IMR-90 (cell line): ENCODE measurements at regions of chr5 and their contacts with region 1.

Region 1: DNA sequence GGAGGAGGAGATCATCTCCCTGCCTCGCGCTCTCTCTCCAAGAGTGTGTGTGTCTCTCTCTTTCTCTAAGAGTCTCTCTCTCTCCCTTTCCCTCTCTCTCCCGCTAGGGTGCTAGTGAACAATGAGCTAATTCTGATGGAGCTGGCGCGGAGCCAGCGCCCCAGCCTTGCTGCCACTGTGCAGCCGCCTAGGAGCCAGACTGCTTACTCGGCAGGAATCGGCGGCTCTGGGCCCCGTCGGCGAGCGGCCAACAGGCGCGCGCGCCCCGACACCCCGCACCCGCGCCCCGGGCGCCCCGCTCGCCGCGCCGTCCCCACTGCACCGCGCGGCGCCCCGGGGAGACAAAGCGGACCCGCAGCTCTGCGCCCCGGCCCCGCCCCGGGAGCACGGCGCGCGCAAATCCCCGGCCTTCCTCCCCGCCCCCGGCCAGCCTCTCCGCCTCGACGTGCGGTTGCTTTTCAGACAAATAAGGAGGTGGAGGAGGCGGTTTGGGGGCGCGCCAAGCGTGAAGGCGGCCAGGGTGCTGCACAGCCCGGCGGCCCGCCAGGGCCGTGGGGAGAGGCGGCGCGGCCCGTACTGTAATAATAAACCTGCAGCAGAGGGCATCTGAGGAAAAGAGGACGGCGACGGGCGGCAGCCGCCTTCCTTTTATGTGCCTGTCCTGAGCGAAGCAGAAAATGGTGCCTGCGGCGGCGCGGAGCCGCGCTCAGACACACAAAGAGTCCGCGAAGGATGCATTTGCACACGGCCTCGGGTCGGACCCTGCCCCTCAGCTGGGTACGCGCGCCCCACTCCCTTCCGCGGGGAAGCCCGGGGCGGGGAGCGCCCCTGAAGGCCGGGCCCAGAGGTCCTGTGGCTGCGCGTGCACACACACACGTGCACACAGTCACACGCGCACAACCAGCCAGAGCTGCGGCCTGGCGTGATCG is 625 bp upstream of the NREP start:
- DNase-seq: peak; percentile 97
- ATAC-seq: peak; percentile 90
- H3K4me3 ChIP-seq: peak overlapping the region; percentile 95
- H3K27ac ChIP-seq: peak overlapping the region; percentile 93
- H3K4me1 ChIP-seq: peaks cover 4% of the 10 kb centered on the region
- H3K27me3 ChIP-seq: no peaks in the 10 kb centered on the region
- CTCF ChIP-seq: peak; percentile 59
- POLR2A ChIP-seq: peak; percentile 77
- RAD21 ChIP-seq: peak; percentile 57

Region 2: DNA sequence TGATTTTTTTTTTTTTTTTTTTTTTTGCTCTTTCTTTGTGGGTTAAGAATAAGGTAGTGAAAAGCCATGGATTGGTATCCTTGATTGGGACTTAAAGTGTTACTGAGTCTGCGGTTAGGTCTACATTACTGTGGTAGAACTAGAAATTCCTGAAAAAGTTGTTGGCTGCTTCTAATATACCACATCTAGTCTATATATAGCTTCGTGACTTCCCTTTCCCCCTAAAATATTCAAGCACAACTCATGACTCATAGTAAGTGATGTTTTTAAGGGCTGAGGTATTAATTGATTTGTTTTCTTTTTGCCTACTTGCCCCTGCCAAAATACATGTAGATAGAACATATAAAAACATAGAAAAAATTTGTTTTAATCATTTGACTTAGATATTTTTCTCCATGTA is 1278.7 kb before region 1 on chr5:
- CTCF ChIA-PET with region 1: no interaction called
- POLR2A ChIA-PET with region 1: no interaction called
- dilution Hi-C with region 1: no loop called
- in situ Hi-C with region 1: no loop called
- intact Hi-C with region 1: no loop called
- DNase-seq: peak; percentile 74
- ATAC-seq: peak; percentile 56
- H3K4me3 ChIP-seq: no peak overlapping the region
- H3K27ac ChIP-seq: no peak overlapping the region
- H3K4me1 ChIP-seq: no peaks in the 10 kb centered on the region
- H3K27me3 ChIP-seq: no peaks in the 10 kb centered on the region
- CTCF ChIP-seq: no peak
- POLR2A ChIP-seq: no peak
- RAD21 ChIP-seq: no peak

Region 3: GRCh38 chr5:110769000-110769681 is 988.5 kb before region 1 on chr5:
- CTCF ChIA-PET with region 1: no interaction called
- POLR2A ChIA-PET with region 1: no interaction called
- dilution Hi-C with region 1: no loop called
- in situ Hi-C with region 1: no loop called
- intact Hi-C with region 1: loop called (anchors 10 kb)
- DNase-seq: peak; percentile 83
- ATAC-seq: peak; percentile 62
- H3K4me3 ChIP-seq: no peak overlapping the region
- H3K27ac ChIP-seq: peak overlapping the region; percentile 69; the same call in 1 of the 2 replicates
- H3K4me1 ChIP-seq: 0 out of 2 replicates have a peak, but pooled peaks cover 2% of the 10 kb centered on the region
- H3K27me3 ChIP-seq: no peaks in the 10 kb centered on the region
- CTCF ChIP-seq: no peak
- POLR2A ChIP-seq: no peak
- RAD21 ChIP-seq: no peak

Region 4: GRCh38 chr5:111472579-111472978 is 285.0 kb before region 1 on chr5:
- CTCF ChIA-PET with region 1: no interaction called
- POLR2A ChIA-PET with region 1: no interaction called
- dilution Hi-C with region 1: no loop called
- in situ Hi-C with region 1: no loop called
- intact Hi-C with region 1: no loop called
- DNase-seq: no peak
- ATAC-seq: no peak
- H3K4me3 ChIP-seq: no peak overlapping the region
- H3K27ac ChIP-seq: no peak overlapping the region
- H3K4me1 ChIP-seq: peaks cover 2% of the 10 kb centered on the region; the same call in 1 of the 2 replicates
- H3K27me3 ChIP-seq: no peaks in the 10 kb centered on the region
- CTCF ChIP-seq: no peak
- POLR2A ChIP-seq: no peak
- RAD21 ChIP-seq: no peak

Region 5: DNA sequence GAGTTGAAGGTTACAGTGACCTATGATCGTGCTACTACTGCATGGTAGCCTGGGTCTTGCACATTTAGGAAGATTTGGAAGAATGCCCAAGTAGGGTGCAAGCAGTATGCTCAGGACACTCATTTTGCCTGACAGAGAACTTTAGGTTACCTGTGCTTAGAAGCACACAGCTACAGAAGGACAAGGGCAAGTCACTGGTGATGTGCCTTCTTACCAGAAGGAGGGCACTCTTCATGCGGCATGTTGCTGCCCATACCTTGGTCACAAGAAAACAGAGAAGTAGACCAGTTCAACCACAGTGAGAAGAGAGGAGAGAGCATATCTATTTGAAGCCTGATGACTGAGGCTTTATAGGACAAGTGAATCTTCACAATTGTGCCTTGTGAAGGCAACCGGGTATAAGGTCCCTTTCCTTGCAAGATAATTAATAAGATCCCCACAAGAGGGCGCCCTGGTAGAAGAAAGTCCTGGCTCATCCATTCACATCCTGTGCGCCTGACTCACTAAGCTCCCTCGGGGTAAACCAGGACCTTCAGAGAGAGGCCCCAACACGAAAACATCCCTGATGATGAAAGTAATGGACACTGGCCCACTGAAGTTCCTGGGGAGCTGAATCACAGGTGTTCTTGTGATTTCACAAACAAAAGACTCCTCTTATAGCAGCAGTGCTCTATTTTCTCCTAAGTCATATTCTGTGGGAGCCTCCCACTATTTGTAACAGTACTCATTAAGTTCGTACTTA is 207.2 kb before region 1 on chr5:
- CTCF ChIA-PET with region 1: interaction called, 3 read pairs
- POLR2A ChIA-PET with region 1: no interaction called
- dilution Hi-C with region 1: no loop called
- in situ Hi-C with region 1: no loop called
- intact Hi-C with region 1: loop called (anchors 1 kb)
- DNase-seq: peak; percentile 99
- ATAC-seq: peak; percentile 96
- H3K4me3 ChIP-seq: no peak overlapping the region
- H3K27ac ChIP-seq: no peak overlapping the region
- H3K4me1 ChIP-seq: no peaks in the 10 kb centered on the region; the same call in 1 of the 2 replicates
- H3K27me3 ChIP-seq: no peaks in the 10 kb centered on the region
- CTCF ChIP-seq: peak; percentile 81
- POLR2A ChIP-seq: no peak
- RAD21 ChIP-seq: peak; percentile 91

Region 6: GRCh38 chr5:111641533-111642230 is 115.9 kb before region 1 on chr5:
- CTCF ChIA-PET with region 1: no interaction called
- POLR2A ChIA-PET with region 1: no interaction called
- dilution Hi-C with region 1: no loop called
- in situ Hi-C with region 1: no loop called
- intact Hi-C with region 1: loop called (anchors 5 kb)
- DNase-seq: peak; percentile 90
- ATAC-seq: peak; percentile 98
- H3K4me3 ChIP-seq: no peak overlapping the region
- H3K27ac ChIP-seq: no peak overlapping the region
- H3K4me1 ChIP-seq: peaks cover 1% of the 10 kb centered on the region; the same call in 1 of the 2 replicates
- H3K27me3 ChIP-seq: peaks cover 29% of the 10 kb centered on the region
- CTCF ChIP-seq: no peak
- POLR2A ChIP-seq: no peak
- RAD21 ChIP-seq: no peak

Region 7: GRCh38 chr5:111997711-111998110 is 240.1 kb after region 1 on chr5:
- CTCF ChIA-PET with region 1: interaction called, 3 read pairs
- POLR2A ChIA-PET with region 1: interaction called, 5 read pairs
- dilution Hi-C with region 1: no loop called
- in situ Hi-C with region 1: no loop called
- intact Hi-C with region 1: loop called (anchors 1 kb)
- DNase-seq: peak; percentile 100
- ATAC-seq: peak; percentile 87
- H3K4me3 ChIP-seq: no peak overlapping the region
- H3K27ac ChIP-seq: no peak overlapping the region
- H3K4me1 ChIP-seq: peaks cover 15% of the 10 kb centered on the region
- H3K27me3 ChIP-seq: no peaks in the 10 kb centered on the region
- CTCF ChIP-seq: no peak
- POLR2A ChIP-seq: no peak
- RAD21 ChIP-seq: 0 out of 2 replicates have a peak, but pooled peaks have one; percentile 7